ENCODE measurements at regions of chr12 and their contacts with region 1.

Region 1: GRCh38 chr12:82527165-82527780 is 159.4 kb upstream of the TMTC2 start:
- DNase-seq: peak; percentile 28 to 75
- ATAC-seq: peak; percentile 71 to 74; a peak in 4 of 6 replicates
- H3K4me3 ChIP-seq: no peak overlapping the region
- H3K27ac ChIP-seq: no peak overlapping the region
- H3K4me1 ChIP-seq: peaks cover 21% of the 10 kb centered on the region
- CTCF ChIP-seq: peak; percentile 91
- EP300 ChIP-seq: no peak
- POLR2A ChIP-seq: no peak
- RAD21 ChIP-seq: peak; percentile 87 to 89

Region 2: GRCh38 chr12:82537436-82537835 is 10.2 kb after region 1 on chr12:
- CTCF ChIA-PET with region 1: interaction called, 10 read pairs
- POLR2A ChIA-PET with region 1: no interaction called
- DNase-seq: no peak
- ATAC-seq: no peak
- H3K4me3 ChIP-seq: no peak overlapping the region
- H3K27ac ChIP-seq: no peak overlapping the region
- H3K4me1 ChIP-seq: no peaks in the 10 kb centered on the region
- CTCF ChIP-seq: no peak
- EP300 ChIP-seq: no peak
- POLR2A ChIP-seq: no peak
- RAD21 ChIP-seq: no peak